ENCODE measurements at regions of chr7 and their contacts with region 1.

Region 1: DNA sequence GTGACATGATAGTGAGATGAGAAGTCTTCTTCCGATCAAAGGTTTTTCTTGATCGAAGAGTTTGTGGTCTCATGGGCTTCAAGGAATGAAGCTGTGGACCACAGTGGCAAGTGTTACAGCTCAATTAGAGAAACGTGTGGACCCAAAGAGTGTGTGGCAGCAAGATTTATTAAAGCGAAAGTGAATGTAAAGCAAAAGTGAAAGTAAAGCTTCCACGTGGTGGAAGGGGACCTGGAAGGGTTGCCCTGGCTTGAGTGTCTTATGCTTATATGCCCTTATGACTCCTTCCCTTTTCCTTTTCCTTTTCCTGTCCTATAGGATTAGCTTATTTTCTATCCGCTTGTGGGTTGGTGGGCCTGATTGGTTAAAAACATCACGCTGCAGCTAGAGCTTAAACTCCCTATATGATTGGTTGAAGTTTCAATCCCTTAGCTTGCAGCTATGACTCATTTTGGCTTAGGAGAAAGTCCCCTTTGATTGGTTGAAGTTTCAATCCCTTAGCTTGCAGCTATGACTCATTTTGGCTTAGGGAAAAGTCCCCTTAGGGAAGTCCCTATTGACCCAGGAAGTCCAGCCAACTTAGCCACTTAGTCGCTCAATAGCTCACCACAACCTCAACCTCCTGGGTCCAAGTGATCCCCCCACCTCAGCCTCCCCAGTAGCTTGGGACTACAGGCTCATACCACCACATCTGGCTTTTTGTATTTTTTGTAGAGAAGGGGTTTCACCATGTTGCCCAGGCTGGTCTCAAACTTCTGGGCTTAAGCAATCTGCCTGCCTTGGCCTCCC is 34.7 kb downstream of the MRPS24 start:
- DNase-seq: peak in 1 of 4 experiments; percentile 24
- ATAC-seq: peak; percentile 33; the same call in 1 of the 3 replicates
- H3K4me3 ChIP-seq: no peak overlapping the region
- H3K27ac ChIP-seq: peak overlapping the region; percentile 18; the same call in 1 of the 3 replicates
- H3K4me1 ChIP-seq: peaks cover 4 to 7% of the 10 kb centered on the region in 2 experiments; a peak in 3 of 5 replicates
- H3K27me3 ChIP-seq: no peaks in the 10 kb centered on the region
- CTCF ChIP-seq: no peak
- EP300 ChIP-seq: no peak
- POLR2A ChIP-seq: no peak
- RAD21 ChIP-seq: no peak

Region 2: DNA sequence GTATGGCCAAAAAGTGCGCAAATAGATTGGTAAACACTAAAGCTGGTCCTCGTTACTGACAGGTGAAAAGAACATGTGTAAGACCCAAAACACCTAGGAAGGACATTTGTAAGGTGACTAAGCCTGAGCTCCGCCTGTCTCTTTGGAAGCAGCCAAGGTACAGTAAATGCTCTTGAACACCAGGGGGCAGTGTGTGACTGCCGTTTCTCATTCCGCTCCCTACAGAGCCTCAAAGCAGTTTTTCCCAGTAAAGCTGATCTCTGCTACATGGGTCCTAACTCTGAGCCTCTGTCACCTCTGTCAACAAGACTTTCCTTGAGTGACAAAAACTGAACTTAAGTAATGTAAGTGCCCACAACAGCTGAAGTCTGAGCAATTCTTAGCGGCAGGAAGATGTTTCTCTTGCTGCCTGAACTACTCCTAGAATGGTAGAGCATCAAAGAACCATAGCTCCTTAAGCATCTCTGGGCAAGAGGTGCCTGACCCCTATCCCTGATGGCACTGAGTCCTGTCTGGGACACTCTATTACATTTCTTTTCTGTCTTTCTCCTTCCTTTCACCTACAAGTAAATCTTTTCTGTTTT is 1893.8 kb before region 1 on chr7:
- CTCF ChIA-PET with region 1: no interaction called
- POLR2A ChIA-PET with region 1: no interaction called
- in situ Hi-C with region 1: loop called (anchors 25 kb)
- intact Hi-C with region 1: loop called (anchors 10 kb)
- DNase-seq: peak; percentile 60 to 73 (median 73)
- ATAC-seq: peak; percentile 94
- H3K4me3 ChIP-seq: no peak overlapping the region
- H3K27ac ChIP-seq: no peak overlapping the region
- H3K4me1 ChIP-seq: peaks cover 0 to 4% of the 10 kb centered on the region in 2 experiments; a peak in 2 of 5 replicates
- H3K27me3 ChIP-seq: peaks cover 0 to 13% of the 10 kb centered on the region in 2 experiments; a peak in 2 of 5 replicates
- CTCF ChIP-seq: peak; percentile 73 to 84 (median 81)
- EP300 ChIP-seq: no peak
- POLR2A ChIP-seq: no peak
- RAD21 ChIP-seq: peak; percentile 53 to 72

Region 3: DNA sequence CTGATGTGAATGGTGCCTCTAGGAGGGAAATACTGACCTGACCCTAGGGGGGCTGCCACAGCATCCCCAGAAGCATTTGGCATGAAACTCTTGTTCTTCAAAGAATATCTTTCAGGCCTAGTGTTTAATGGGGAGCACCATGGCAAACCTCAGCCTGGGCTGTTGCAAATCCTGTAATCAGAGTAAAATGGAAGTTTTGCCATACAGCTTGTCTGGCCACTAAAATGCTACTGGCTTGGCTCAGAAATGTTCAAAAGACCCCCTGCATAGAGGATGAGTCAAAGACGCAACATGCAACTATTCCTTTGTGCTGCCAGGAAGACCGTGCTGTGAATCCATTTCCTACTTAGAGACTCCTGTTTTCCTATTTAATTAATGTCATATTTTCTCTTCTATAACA is 695.5 kb before region 1 on chr7:
- CTCF ChIA-PET with region 1: no interaction called
- POLR2A ChIA-PET with region 1: no interaction called
- in situ Hi-C with region 1: no loop called
- intact Hi-C with region 1: no loop called
- DNase-seq: no peak
- ATAC-seq: no peak
- H3K4me3 ChIP-seq: no peak overlapping the region
- H3K27ac ChIP-seq: no peak overlapping the region
- H3K4me1 ChIP-seq: no peaks in the 10 kb centered on the region
- H3K27me3 ChIP-seq: peaks cover 20 to 36% of the 10 kb centered on the region in 2 experiments
- CTCF ChIP-seq: no peak
- EP300 ChIP-seq: no peak
- POLR2A ChIP-seq: no peak
- RAD21 ChIP-seq: no peak

Region 4: GRCh38 chr7:43454936-43455518 is 379.6 kb before region 1 on chr7:
- CTCF ChIA-PET with region 1: interaction called, 25 read pairs
- POLR2A ChIA-PET with region 1: no interaction called
- in situ Hi-C with region 1: no loop called
- intact Hi-C with region 1: loop called (anchors 2 kb)
- DNase-seq: peak; percentile 28 to 45 (median 36)
- ATAC-seq: peak; percentile 70; the same call in 2 of the 3 replicates
- H3K4me3 ChIP-seq: no peak overlapping the region
- H3K27ac ChIP-seq: no peak overlapping the region
- H3K4me1 ChIP-seq: no peaks in the 10 kb centered on the region; a peak in 1 of 5 replicates
- H3K27me3 ChIP-seq: peaks cover 20 to 21% of the 10 kb centered on the region in 2 experiments; a peak in 4 of 5 replicates
- CTCF ChIP-seq: peak; percentile 39 to 73 (median 51); a peak in 5 of 6 replicates
- EP300 ChIP-seq: no peak
- POLR2A ChIP-seq: no peak
- RAD21 ChIP-seq: peak; percentile 28 to 55; a peak in 3 of 4 replicates

Region 5: GRCh38 chr7:43700059-43700501 is 134.6 kb before region 1 on chr7:
- CTCF ChIA-PET with region 1: no interaction called
- POLR2A ChIA-PET with region 1: no interaction called
- in situ Hi-C with region 1: no loop called
- intact Hi-C with region 1: loop called (anchors 5 kb)
- DNase-seq: peak in 2 of 4 experiments; percentile 28 to 37
- ATAC-seq: peak; percentile 79
- H3K4me3 ChIP-seq: no peak overlapping the region
- H3K27ac ChIP-seq: no peak overlapping the region
- H3K4me1 ChIP-seq: no peaks in the 10 kb centered on the region
- H3K27me3 ChIP-seq: no peaks in the 10 kb centered on the region
- CTCF ChIP-seq: peak; percentile 46 to 79 (median 50); a peak in 4 of 6 replicates
- EP300 ChIP-seq: no peak
- POLR2A ChIP-seq: no peak
- RAD21 ChIP-seq: peak; percentile 77 to 84

Region 6: GRCh38 chr7:43735802-43736541 is 98.7 kb before region 1 on chr7:
- CTCF ChIA-PET with region 1: no interaction called
- POLR2A ChIA-PET with region 1: no interaction called
- in situ Hi-C with region 1: no loop called
- intact Hi-C with region 1: no loop called
- DNase-seq: peak in 1 of 4 experiments; percentile 81
- ATAC-seq: peak; percentile 77
- H3K4me3 ChIP-seq: no peak overlapping the region
- H3K27ac ChIP-seq: peak overlapping the region; percentile 76
- H3K4me1 ChIP-seq: peaks cover 12 to 24% of the 10 kb centered on the region in 2 experiments
- H3K27me3 ChIP-seq: no peaks in the 10 kb centered on the region
- CTCF ChIP-seq: no peak
- EP300 ChIP-seq: peak; percentile 70
- POLR2A ChIP-seq: no peak
- RAD21 ChIP-seq: no peak

Region 7: GRCh38 chr7:43954524-43955228 is 120.0 kb after region 1 on chr7:
- CTCF ChIA-PET with region 1: interaction called, 5 read pairs
- POLR2A ChIA-PET with region 1: no interaction called
- in situ Hi-C with region 1: no loop called
- intact Hi-C with region 1: loop called (anchors 1 kb)
- DNase-seq: peak; percentile 51 to 70 (median 60)
- ATAC-seq: peak; percentile 99
- H3K4me3 ChIP-seq: no peak overlapping the region
- H3K27ac ChIP-seq: no peak overlapping the region
- H3K4me1 ChIP-seq: no peaks in the 10 kb centered on the region
- H3K27me3 ChIP-seq: no peaks in the 10 kb centered on the region
- CTCF ChIP-seq: peak; percentile 71 to 79 (median 74)
- EP300 ChIP-seq: no peak
- POLR2A ChIP-seq: no peak
- RAD21 ChIP-seq: peak; percentile 33 to 74; a peak in 2 of 4 replicates

Measured in K562 (cell line).